ENCODE measurements at regions of chr9 and their contacts with region 1.

Region 1: DNA sequence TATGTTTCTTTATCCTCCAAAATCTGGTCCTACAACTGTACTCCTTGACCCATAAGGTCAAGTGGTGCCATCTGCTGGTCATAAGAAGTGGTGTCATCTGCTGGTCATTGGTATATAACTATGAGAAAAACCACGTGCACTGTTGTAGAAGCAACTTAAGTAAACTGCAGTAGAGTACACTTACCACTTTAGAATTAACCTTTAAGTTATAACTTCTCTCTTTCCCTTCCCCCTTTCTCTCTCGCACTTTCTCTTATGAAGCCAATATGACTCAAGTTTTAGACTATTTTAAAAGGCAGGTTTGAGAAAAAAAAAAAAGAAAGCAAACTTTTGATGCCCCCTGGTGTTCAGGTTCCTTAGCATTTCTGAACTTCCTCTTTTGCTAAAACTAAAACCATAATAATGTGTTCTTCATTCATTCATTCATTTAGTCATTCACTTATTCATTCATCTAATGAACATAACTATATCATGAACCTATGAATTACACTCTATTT is 12.8 kb upstream of the MTAP start:
- DNase-seq: no peak
- H3K4me3 ChIP-seq: peak overlapping the region; percentile 48
- CTCF ChIP-seq: peak; percentile 61

Region 2: GRCh38 chr9:21334701-21335632 is 454.6 kb before region 1 on chr9 and contains the start of gene KLHL9:
- CTCF ChIA-PET with region 1: interaction called, 13 read pairs
- POLR2A ChIA-PET with region 1: no interaction called
- DNase-seq: peak; percentile 52
- H3K4me3 ChIP-seq: peak within 1 kb of the TSS; percentile 81
- CTCF ChIP-seq: no peak

Region 3: GRCh38 chr9:21473236-21473635 is 316.4 kb before region 1 on chr9:
- CTCF ChIA-PET with region 1: interaction called, 77 read pairs
- POLR2A ChIA-PET with region 1: no interaction called
- DNase-seq: no peak
- H3K4me3 ChIP-seq: no peak overlapping the region
- CTCF ChIP-seq: no peak

Region 4: GRCh38 chr9:21570643-21571275 is 218.8 kb before region 1 on chr9:
- CTCF ChIA-PET with region 1: interaction called, 11 read pairs
- POLR2A ChIA-PET with region 1: no interaction called
- DNase-seq: no peak
- H3K4me3 ChIP-seq: no peak overlapping the region
- CTCF ChIP-seq: no peak

Region 5: GRCh38 chr9:21688108-21689102 is 101.2 kb before region 1 on chr9:
- CTCF ChIA-PET with region 1: interaction called, 11 read pairs
- POLR2A ChIA-PET with region 1: no interaction called
- DNase-seq: peak; percentile 36
- H3K4me3 ChIP-seq: peak overlapping the region; percentile 26
- CTCF ChIP-seq: no peak

Region 6: GRCh38 chr9:21777701-21778100 is 11.9 kb before region 1 on chr9:
- CTCF ChIA-PET with region 1: interaction called, 28 read pairs
- POLR2A ChIA-PET with region 1: interaction called, 4 read pairs
- DNase-seq: peak; percentile 78
- H3K4me3 ChIP-seq: no peak overlapping the region
- CTCF ChIP-seq: no peak

Region 7: DNA sequence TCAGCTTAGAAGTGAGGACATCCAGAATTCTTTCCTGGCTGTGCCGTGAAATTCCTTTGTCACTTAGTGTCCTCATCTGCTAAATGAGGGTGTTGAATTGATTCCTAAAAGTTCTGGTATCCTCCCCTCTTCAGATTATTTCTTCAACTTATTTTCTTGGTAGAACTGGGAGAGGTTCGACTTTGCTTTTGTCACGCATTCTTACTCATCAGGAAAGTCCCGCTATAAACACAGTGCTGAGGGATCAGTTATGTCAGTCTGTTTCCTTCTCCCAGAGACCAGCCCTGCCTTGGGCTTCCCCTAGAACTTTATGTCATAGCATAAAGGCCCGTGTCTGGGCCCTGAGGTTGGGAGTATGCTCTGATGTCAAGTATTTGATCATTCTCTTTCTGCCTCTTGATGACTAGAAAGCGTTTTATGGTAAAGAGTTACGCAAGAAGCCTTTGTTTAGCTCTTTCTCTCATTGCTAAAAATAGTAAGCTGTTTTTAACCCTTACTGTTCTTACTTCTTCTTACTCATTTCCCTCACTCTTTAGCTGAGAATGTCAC is 42.4 kb after region 1 on chr9:
- CTCF ChIA-PET with region 1: no interaction called
- POLR2A ChIA-PET with region 1: no interaction called
- DNase-seq: peak; percentile 79
- H3K4me3 ChIP-seq: no peak overlapping the region
- CTCF ChIP-seq: no peak